Activated naive CD4-positive, alpha-beta T cell treated with anti-CD3 and anti-CD28 coated beads, Interleukin-2, amount 10 ng/mL, durations not matched to agents 7 days and 5 days (primary cell): ENCODE measurements at regions of chr13 and their contacts with region 1.

Region 1: GRCh38 chr13:79423801-79424642 is 18.0 kb upstream of the RBM26 start:
- DNase-seq: no peak
- H3K4me3 Mint-ChIP-seq: no peak overlapping the region
- H3K27ac Mint-ChIP-seq: no peak overlapping the region
- H3K4me1 Mint-ChIP-seq: no peaks in the 10 kb centered on the region
- H3K27me3 Mint-ChIP-seq: no peaks in the 10 kb centered on the region

Region 2: GRCh38 chr13:79408352-79408751 is 15.7 kb before region 1 on chr13:
- CTCF ChIA-PET with region 1: interaction called, 10 read pairs
- DNase-seq: no peak
- H3K4me3 Mint-ChIP-seq: no peak overlapping the region
- H3K27ac Mint-ChIP-seq: no peak overlapping the region
- H3K4me1 Mint-ChIP-seq: peaks cover 16% of the 10 kb centered on the region
- H3K27me3 Mint-ChIP-seq: no peaks in the 10 kb centered on the region

Region 3: GRCh38 chr13:79480954-79481684 is 57.1 kb after region 1 on chr13 and contains the start of gene NDFIP2:
- CTCF ChIA-PET with region 1: interaction called, 37 read pairs
- DNase-seq: peak; percentile 84
- H3K4me3 Mint-ChIP-seq: peak within 1 kb of the TSS; percentile 87
- H3K27ac Mint-ChIP-seq: peak within 1 kb of the TSS; percentile 72
- H3K4me1 Mint-ChIP-seq: peaks cover 46% of the 10 kb centered on the region
- H3K27me3 Mint-ChIP-seq: peaks cover 37% of the 10 kb centered on the region

Region 4: DNA sequence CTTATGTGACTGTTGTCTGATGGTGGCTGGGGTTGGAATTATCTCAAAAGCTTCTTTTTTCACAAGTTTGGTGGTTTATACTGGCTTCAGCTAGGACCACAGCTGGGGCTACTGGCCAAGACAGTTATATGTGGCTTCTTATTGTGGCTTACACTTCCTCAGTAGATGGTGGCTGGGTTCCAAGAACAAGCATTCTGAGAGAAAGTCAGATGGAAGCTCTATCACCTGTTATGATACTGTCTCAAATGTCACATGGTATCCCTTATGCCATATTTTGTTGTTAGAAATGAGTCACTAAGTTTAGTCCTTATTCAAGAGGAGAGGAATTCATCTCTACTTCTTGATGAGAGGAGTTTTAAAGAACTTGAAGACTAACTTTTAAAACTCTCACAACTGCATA is 98.6 kb after region 1 on chr13:
- CTCF ChIA-PET with region 1: interaction called, 37 read pairs
- DNase-seq: peak; percentile 47
- H3K4me3 Mint-ChIP-seq: peak overlapping the region; percentile 11
- H3K27ac Mint-ChIP-seq: peak overlapping the region; percentile 86
- H3K4me1 Mint-ChIP-seq: peaks cover 35% of the 10 kb centered on the region
- H3K27me3 Mint-ChIP-seq: no peaks in the 10 kb centered on the region

Region 5: DNA sequence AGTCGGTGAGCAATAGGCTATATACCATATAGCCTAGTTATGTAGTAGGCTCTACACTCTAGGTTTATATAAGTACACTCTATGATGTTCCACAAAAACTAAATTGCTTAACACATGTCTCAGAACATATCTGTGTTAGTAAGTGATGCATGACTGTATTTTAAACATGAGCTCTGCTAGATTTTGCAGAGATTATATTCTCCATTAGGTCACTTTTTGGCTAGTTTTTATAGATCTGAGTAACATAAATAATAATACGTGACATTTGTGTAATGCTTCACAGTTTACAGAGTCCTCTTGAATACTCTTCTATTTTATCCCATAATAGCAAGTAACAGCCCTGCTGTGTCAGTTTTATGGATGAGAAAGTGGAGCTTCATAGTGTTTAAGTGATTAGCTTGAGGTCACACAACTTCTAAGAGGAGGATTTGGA is 104.8 kb after region 1 on chr13:
- CTCF ChIA-PET with region 1: interaction called, 37 read pairs
- DNase-seq: no peak
- H3K4me3 Mint-ChIP-seq: no peak overlapping the region
- H3K27ac Mint-ChIP-seq: no peak overlapping the region
- H3K4me1 Mint-ChIP-seq: peaks cover 17% of the 10 kb centered on the region
- H3K27me3 Mint-ChIP-seq: no peaks in the 10 kb centered on the region

Region 6: DNA sequence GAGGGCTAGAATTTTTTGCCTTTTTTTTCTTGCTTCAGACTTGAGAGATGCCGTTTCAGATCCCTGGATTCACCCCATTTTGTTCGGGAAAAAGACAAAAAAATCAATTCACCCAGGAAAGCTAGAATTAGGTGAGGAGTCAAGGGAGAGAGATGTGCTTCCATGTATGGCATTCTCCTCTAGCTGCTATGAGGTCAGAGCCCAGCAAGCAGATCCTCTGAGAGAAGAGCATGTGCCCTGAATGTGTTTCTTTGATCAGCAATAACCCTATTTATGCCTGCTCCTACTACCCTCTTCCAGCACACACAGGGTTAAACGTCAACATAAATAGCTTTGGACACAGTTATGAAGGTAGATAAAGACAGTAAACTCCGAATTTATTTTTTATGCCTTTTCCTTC is 110.6 kb after region 1 on chr13:
- CTCF ChIA-PET with region 1: interaction called, 159 read pairs
- DNase-seq: no peak
- H3K4me3 Mint-ChIP-seq: no peak overlapping the region
- H3K27ac Mint-ChIP-seq: no peak overlapping the region
- H3K4me1 Mint-ChIP-seq: peaks cover 17% of the 10 kb centered on the region
- H3K27me3 Mint-ChIP-seq: no peaks in the 10 kb centered on the region

Region 7: GRCh38 chr13:79541426-79542049 is 117.5 kb after region 1 on chr13:
- CTCF ChIA-PET with region 1: interaction called, 159 read pairs
- DNase-seq: no peak
- H3K4me3 Mint-ChIP-seq: no peak overlapping the region
- H3K27ac Mint-ChIP-seq: no peak overlapping the region
- H3K4me1 Mint-ChIP-seq: peaks cover 2% of the 10 kb centered on the region
- H3K27me3 Mint-ChIP-seq: no peaks in the 10 kb centered on the region

Region 8: DNA sequence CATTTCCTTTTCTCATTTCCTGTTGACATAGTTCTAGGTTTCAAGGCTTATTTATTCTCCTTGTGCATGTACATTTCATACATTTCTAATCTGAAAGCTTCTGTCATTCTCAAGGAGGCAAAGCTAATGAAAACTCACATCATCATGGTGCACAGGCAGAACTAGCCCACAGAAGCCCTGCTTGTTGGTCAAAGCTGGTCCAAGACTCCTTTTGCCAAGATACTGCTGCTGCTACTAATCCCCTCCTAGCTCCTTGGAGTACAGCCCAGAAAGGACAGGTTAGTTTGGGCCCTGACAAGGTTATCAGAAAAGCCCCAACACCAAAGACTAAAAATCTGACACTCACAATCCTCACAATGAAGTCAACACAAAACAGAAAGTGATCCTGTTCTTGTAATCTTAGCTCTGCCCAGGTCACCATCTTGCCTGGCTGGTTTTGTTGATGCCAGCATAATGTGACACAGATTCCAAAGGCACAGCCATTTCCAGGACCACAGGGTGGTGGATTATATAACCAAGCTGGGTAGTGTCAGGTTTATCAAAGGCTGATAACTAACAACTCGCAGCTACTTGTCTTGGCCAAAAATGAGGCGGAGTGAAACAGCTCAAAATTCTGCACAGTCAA is 474.3 kb after region 1 on chr13:
- CTCF ChIA-PET with region 1: no interaction called
- DNase-seq: no peak
- H3K4me3 Mint-ChIP-seq: no peak overlapping the region
- H3K27ac Mint-ChIP-seq: no peak overlapping the region
- H3K4me1 Mint-ChIP-seq: no peaks in the 10 kb centered on the region
- H3K27me3 Mint-ChIP-seq: no peaks in the 10 kb centered on the region